B cell (primary cell): ENCODE measurements at regions of chr1 and their contacts with region 1.

Region 1: DNA sequence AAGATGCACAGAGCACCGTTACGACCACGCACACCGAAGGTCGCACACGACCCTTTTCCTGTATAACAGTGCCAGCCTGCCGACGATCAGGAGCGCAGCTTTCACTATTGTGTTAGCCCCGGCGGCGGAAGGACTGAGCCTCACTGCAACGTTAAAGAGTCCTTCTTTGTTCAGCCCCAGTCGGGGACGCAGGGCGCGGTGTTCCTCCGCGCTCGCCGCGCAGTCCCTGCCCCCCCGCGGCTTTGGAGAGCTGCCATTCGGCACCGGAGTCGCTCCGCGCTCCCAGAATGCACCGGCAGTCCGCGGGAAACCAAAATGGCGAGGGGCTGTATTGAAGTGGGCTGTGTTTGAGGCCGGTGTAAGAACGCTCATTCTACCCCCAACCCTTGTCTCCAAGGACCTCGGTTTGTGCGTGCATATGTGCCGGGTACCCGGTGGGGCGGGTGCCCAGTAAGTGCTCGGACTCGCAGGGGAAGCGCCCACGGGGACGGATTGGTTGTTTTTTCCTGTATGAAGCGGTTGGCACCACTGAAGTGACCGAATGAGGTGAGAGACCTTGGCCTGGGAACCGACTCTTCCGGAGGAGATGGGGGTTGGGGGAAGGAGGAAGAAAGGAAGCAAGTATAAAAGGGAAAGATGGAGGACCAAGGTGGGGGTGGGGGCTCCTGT is at the start of gene MTF2:
- DNase-seq: peak; percentile 95
- ATAC-seq: peak; percentile 92
- H3K4me3 ChIP-seq: peak within 1 kb of the TSS; percentile 85 to 98 (median 89)
- H3K4me3 Mint-ChIP-seq: peak within 1 kb of the TSS; percentile 100
- H3K27ac ChIP-seq: peak within 1 kb of the TSS; percentile 80 to 87
- H3K27ac Mint-ChIP-seq: peak within 1 kb of the TSS; percentile 99
- H3K4me1 ChIP-seq: peaks cover 24 to 30% of the 10 kb centered on the region in 2 donors
- H3K4me1 Mint-ChIP-seq: peaks cover 46% of the 10 kb centered on the region
- H3K27me3 ChIP-seq: no peaks in the 10 kb centered on the region
- H3K27me3 Mint-ChIP-seq: no peaks in the 10 kb centered on the region
- CTCF ChIP-seq: no peak
- total RNA-seq, gene MTF2: 66.2 and 68.6 TPM in 2 replicates

Region 2: DNA sequence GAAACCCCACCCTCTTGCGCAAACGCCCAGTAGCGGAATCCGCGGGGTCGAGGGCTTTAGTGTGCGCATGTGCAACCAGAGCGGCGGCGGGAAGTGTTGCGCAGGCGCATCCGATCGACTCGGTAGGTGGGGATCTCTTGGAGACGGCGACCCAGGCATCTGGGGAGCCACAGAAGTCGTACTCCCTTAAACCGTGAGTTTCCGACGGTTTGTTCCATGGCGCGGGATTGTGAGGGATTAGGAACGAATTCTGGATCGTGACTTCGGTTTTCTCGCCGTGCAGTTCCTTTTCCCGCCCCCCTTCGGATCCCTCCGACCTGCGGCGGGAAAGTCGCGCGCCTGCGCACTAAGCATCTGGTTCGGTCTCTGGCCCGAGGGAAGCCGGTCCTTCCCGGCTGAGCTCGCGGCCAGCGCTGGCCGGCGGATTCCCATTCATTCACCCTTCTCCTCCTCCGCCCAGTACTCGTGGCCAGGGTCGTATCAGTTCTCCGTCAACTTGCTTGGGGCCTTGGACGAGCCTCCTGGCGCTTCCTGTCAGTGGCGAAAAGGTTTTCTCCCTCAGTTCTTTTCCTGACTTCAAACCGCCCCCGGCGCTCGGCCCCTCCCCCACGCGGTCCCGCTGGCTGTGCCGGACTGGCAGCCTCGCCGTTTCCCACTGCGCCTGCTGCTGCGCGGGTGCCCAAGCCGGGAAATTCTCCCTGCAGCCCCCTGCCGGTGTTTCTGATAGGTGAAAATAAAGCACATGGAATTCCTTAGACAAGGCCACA is 1578.2 kb before region 1 on chr1 and contains the start of gene CDC7:
- CTCF ChIA-PET with region 1: no interaction called
- POLR2A ChIA-PET with region 1: no interaction called
- intact Hi-C with region 1: loop called (anchors 5 kb)
- DNase-seq: peak; percentile 92
- ATAC-seq: peak; percentile 87
- H3K4me3 ChIP-seq: peak within 1 kb of the TSS; percentile 85 to 95 (median 90)
- H3K4me3 Mint-ChIP-seq: no peak within 1 kb of the TSS
- H3K27ac ChIP-seq: peak within 1 kb of the TSS; percentile 61 to 82
- H3K27ac Mint-ChIP-seq: no peak within 1 kb of the TSS
- H3K4me1 ChIP-seq: peaks cover 14 to 15% of the 10 kb centered on the region in 2 donors
- H3K4me1 Mint-ChIP-seq: peaks cover 17% of the 10 kb centered on the region
- H3K27me3 ChIP-seq: no peaks in the 10 kb centered on the region
- H3K27me3 Mint-ChIP-seq: no peaks in the 10 kb centered on the region
- CTCF ChIP-seq: peak; percentile 59
- total RNA-seq, gene CDC7: 7.4 and 8.7 TPM in 2 replicates

Region 3: GRCh38 chr1:92784639-92785500 is 294.2 kb before region 1 on chr1 and contains the start of gene EVI5:
- CTCF ChIA-PET with region 1: interaction called, 3 read pairs
- POLR2A ChIA-PET with region 1: interaction called, 3 read pairs
- intact Hi-C with region 1: loop called (anchors 1 kb)
- DNase-seq: peak; percentile 95
- ATAC-seq: peak; percentile 89
- H3K4me3 ChIP-seq: peak within 1 kb of the TSS; percentile 54 to 87 (median 71)
- H3K4me3 Mint-ChIP-seq: peak within 1 kb of the TSS; percentile 94
- H3K27ac ChIP-seq: peak within 1 kb of the TSS; percentile 80 to 94
- H3K27ac Mint-ChIP-seq: peak within 1 kb of the TSS; percentile 95
- H3K4me1 ChIP-seq: peaks cover 7 to 17% of the 10 kb centered on the region in 2 donors
- H3K4me1 Mint-ChIP-seq: peaks cover 26% of the 10 kb centered on the region
- H3K27me3 ChIP-seq: no peaks in the 10 kb centered on the region
- H3K27me3 Mint-ChIP-seq: no peaks in the 10 kb centered on the region
- CTCF ChIP-seq: no peak
- total RNA-seq, gene EVI5: 35.4 and 36.3 TPM in 2 replicates

Region 4: DNA sequence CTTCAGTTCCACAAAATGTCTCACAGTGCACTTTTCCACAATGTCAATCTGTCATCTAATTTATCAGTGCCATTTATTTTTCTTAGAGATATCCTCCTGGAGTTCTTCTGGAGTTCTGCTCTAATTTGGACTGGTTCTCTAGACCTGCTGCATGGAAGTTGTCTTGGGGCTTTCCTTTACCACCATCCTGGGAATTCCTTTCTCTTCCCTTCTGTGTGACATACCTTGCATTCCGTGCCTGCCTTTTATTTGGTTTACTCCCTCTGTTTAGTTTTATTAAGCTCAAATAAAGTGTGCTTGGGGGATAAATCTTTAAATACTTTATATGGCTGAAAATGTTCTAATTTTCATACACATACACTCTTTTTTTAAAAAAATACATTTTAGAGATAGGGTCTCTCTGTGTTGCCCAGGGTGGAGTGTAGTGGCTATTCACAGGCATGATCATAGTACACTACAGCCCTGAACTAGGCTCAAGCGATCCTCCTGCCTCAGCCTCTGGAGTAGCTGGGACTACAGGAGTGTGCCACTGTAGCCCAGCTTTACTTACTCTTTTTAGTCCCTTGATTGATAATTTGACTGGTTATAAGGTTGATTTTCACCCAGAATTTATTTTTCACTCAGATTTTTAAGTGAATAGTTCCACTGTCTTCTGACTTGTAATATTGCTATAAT is 14.3 kb after region 1 on chr1:
- CTCF ChIA-PET with region 1: interaction called, 10 read pairs
- POLR2A ChIA-PET with region 1: interaction called, 3 read pairs
- intact Hi-C with region 1: no loop called
- DNase-seq: no peak
- ATAC-seq: no peak
- H3K4me3 ChIP-seq: no peak overlapping the region
- H3K4me3 Mint-ChIP-seq: no peak overlapping the region
- H3K27ac ChIP-seq: no peak overlapping the region
- H3K27ac Mint-ChIP-seq: peak overlapping the region; percentile 47
- H3K4me1 ChIP-seq: peaks cover 6 to 7% of the 10 kb centered on the region in 2 donors
- H3K4me1 Mint-ChIP-seq: peaks cover 48% of the 10 kb centered on the region
- H3K27me3 ChIP-seq: no peaks in the 10 kb centered on the region
- H3K27me3 Mint-ChIP-seq: no peaks in the 10 kb centered on the region
- CTCF ChIP-seq: no peak

Region 5: DNA sequence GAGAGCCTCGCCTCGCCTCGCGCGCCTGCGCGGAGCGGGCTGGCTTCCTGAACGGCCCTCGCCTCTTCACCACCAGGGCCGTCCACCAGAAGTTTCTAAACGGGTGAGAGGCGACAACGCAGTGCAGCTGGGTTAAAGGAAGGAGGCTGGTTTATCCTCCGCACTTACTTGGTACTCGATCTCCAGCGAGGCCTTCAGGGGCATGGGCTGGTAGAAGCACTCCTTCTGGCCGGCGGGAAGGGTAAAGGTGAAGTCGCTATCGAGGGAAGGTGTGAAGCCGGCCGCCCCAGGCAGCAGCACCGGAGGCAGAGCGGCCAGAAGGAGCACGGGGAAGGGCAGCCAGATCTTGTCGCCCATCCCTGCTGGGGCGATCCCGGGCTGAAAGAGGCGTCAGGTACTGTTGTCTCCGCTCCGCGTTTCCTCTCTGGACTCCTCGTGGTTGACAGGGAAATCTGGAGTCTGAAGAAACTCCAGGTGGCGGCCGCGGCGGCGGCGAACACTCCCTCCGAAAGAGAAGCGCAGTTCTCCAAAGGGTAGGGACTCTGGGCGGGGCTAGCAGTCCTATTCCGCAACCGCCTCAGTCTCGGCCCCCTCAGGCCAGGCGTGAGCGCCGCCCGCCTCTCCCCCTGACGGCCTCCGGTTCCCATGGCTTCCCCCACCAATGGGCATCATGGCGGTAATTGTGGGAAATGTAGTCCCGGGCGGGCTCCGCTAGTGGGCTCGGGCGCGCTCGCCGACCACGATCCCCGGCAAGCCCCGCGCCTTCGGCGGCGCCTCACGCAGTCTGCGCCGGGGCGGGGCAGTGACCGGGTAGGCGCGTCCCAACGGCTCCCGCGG is 101.0 kb after region 1 on chr1 and contains the start of gene TMED5:
- CTCF ChIA-PET with region 1: interaction called, 4 read pairs
- POLR2A ChIA-PET with region 1: no interaction called
- intact Hi-C with region 1: loop called (anchors 1 kb)
- DNase-seq: peak; percentile 97
- ATAC-seq: peak; percentile 85
- H3K4me3 ChIP-seq: peak within 1 kb of the TSS; percentile 81 to 98 (median 97)
- H3K4me3 Mint-ChIP-seq: peak within 1 kb of the TSS; percentile 90
- H3K27ac ChIP-seq: peak within 1 kb of the TSS; percentile 95 to 96
- H3K27ac Mint-ChIP-seq: peak within 1 kb of the TSS; percentile 93
- H3K4me1 ChIP-seq: peaks cover 27 to 35% of the 10 kb centered on the region in 2 donors
- H3K4me1 Mint-ChIP-seq: peaks cover 34% of the 10 kb centered on the region
- H3K27me3 ChIP-seq: no peaks in the 10 kb centered on the region
- H3K27me3 Mint-ChIP-seq: no peaks in the 10 kb centered on the region
- CTCF ChIP-seq: peak; percentile 24
- total RNA-seq, gene TMED5: 46.1 and 50.7 TPM in 2 replicates

Region 6: GRCh38 chr1:93345633-93346420 is 266.7 kb after region 1 on chr1 and contains the start of gene DR1:
- CTCF ChIA-PET with region 1: interaction called, 3 read pairs
- POLR2A ChIA-PET with region 1: interaction called, 6 read pairs
- intact Hi-C with region 1: loop called (anchors 2 kb)
- DNase-seq: peak; percentile 93
- ATAC-seq: peak; percentile 84
- H3K4me3 ChIP-seq: peak within 1 kb of the TSS; percentile 78 to 94 (median 91)
- H3K4me3 Mint-ChIP-seq: peak within 1 kb of the TSS; percentile 95
- H3K27ac ChIP-seq: peak within 1 kb of the TSS; percentile 81 to 95
- H3K27ac Mint-ChIP-seq: peak within 1 kb of the TSS; percentile 98
- H3K4me1 ChIP-seq: peaks cover 12 to 40% of the 10 kb centered on the region in 2 donors
- H3K4me1 Mint-ChIP-seq: peaks cover 50% of the 10 kb centered on the region
- H3K27me3 ChIP-seq: no peaks in the 10 kb centered on the region
- H3K27me3 Mint-ChIP-seq: no peaks in the 10 kb centered on the region
- CTCF ChIP-seq: no peak
- total RNA-seq, gene DR1: 65.6 and 69.2 TPM in 2 replicates